ENCODE measurements at regions of chr1 and their contacts with region 1.

Region 1: GRCh38 chr1:163071405-163072255 is 2.5 kb downstream of the RGS4 start:
- DNase-seq: peak; percentile 72
- ATAC-seq: peak; percentile 47
- H3K4me3 Mint-ChIP-seq: no peak overlapping the region
- H3K27ac Mint-ChIP-seq: no peak overlapping the region
- H3K4me1 Mint-ChIP-seq: peaks cover 18% of the 10 kb centered on the region
- H3K27me3 Mint-ChIP-seq: no peaks in the 10 kb centered on the region
- CTCF ChIP-seq: peak; percentile 46; the same call in 1 of the 2 replicates

Region 2: GRCh38 chr1:162847839-162848453 is 223.7 kb before region 1 on chr1:
- CTCF ChIA-PET with region 1: interaction called, 13 read pairs
- POLR2A ChIA-PET with region 1: no interaction called
- DNase-seq: peak; percentile 86
- ATAC-seq: peak; percentile 47
- H3K4me3 Mint-ChIP-seq: no peak overlapping the region
- H3K27ac Mint-ChIP-seq: no peak overlapping the region
- H3K4me1 Mint-ChIP-seq: no peaks in the 10 kb centered on the region
- H3K27me3 Mint-ChIP-seq: no peaks in the 10 kb centered on the region; the same call in 1 of the 2 replicates
- CTCF ChIP-seq: peak; percentile 80; the same call in 1 of the 2 replicates

Region 3: GRCh38 chr1:162854245-162854882 is 217.3 kb before region 1 on chr1:
- CTCF ChIA-PET with region 1: interaction called, 17 read pairs
- POLR2A ChIA-PET with region 1: no interaction called
- DNase-seq: peak; percentile 60
- ATAC-seq: peak; percentile 82
- H3K4me3 Mint-ChIP-seq: no peak overlapping the region
- H3K27ac Mint-ChIP-seq: no peak overlapping the region
- H3K4me1 Mint-ChIP-seq: no peaks in the 10 kb centered on the region
- H3K27me3 Mint-ChIP-seq: no peaks in the 10 kb centered on the region
- CTCF ChIP-seq: peak; percentile 41

Region 4: DNA sequence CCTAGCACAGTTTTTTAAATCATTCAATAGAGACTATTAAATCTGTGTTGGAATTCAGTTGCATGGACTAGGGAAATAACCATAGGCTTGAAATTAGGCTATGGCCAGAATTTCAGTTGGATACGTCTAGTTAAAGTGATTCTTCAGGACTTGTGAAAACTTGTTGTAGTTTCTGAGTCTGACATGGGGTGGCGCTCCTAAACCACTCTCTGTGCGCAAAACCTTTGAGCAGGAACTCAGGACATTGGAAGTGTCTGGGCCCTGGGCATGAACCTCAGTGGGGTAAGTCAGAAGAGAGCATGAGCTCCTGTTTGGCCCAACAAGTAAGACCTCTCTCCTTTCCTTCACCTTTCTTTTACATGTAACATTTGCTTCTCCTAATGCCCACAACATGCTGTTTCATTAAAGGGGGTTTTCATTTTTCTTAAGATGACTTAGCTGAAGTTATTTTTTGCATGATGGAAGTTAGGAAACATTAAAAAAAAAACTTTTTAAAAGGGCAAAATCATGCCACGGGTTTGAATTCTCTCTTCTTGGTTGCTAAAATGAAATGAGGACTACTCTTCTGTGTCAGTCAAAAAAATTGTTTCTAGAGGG is 193.5 kb before region 1 on chr1:
- CTCF ChIA-PET with region 1: interaction called, 36 read pairs
- POLR2A ChIA-PET with region 1: no interaction called
- DNase-seq: peak; percentile 83
- ATAC-seq: peak; percentile 94
- H3K4me3 Mint-ChIP-seq: no peak overlapping the region
- H3K27ac Mint-ChIP-seq: no peak overlapping the region
- H3K4me1 Mint-ChIP-seq: peaks cover 14% of the 10 kb centered on the region
- H3K27me3 Mint-ChIP-seq: no peaks in the 10 kb centered on the region
- CTCF ChIP-seq: peak; percentile 71

Region 5: DNA sequence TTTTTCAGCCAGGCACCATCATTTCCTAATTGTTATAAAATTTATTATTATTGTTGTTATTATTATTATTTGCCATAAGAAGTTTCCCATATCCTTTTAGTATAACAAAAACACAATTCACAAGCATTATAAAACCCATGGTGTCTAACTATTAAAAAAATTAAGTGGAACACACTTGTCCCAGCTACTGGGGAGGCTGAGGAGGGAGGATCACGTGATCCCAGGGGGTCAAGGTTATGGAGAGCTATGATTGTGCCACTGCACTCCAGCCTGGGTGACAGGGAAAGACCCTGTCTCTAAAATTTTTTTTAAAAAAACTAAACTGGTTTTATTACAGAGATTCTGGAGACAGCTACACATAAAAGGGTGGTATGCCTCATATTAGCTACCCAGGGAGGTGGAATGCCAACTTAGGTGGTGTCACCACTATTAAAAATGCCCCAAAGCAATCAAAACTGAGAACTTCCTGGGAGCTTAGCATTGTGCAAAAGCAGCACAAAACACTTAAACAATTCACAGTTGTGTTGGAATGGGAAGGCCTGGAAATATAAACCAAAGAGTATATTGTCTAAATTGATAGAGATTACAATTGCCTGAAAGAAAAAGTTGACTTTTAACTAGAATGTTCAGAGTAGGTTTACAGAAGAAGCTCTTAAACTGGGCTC is 11.2 kb before region 1 on chr1:
- CTCF ChIA-PET with region 1: interaction called, 11 read pairs
- POLR2A ChIA-PET with region 1: interaction called, 5 read pairs
- DNase-seq: no peak
- ATAC-seq: no peak
- H3K4me3 Mint-ChIP-seq: no peak overlapping the region
- H3K27ac Mint-ChIP-seq: no peak overlapping the region
- H3K4me1 Mint-ChIP-seq: peaks cover 23% of the 10 kb centered on the region
- H3K27me3 Mint-ChIP-seq: no peaks in the 10 kb centered on the region
- CTCF ChIP-seq: no peak

Region 6: GRCh38 chr1:163174524-163175437 is 103.2 kb after region 1 on chr1:
- CTCF ChIA-PET with region 1: interaction called, 22 read pairs
- POLR2A ChIA-PET with region 1: no interaction called
- DNase-seq: peak; percentile 71
- ATAC-seq: peak; percentile 77
- H3K4me3 Mint-ChIP-seq: 0 out of 2 replicates have a peak overlapping the region, but pooled peaks have one; percentile 6
- H3K27ac Mint-ChIP-seq: peak overlapping the region; percentile 38; the same call in 1 of the 2 replicates
- H3K4me1 Mint-ChIP-seq: peaks cover 23% of the 10 kb centered on the region
- H3K27me3 Mint-ChIP-seq: no peaks in the 10 kb centered on the region
- CTCF ChIP-seq: peak; percentile 56

Region 7: DNA sequence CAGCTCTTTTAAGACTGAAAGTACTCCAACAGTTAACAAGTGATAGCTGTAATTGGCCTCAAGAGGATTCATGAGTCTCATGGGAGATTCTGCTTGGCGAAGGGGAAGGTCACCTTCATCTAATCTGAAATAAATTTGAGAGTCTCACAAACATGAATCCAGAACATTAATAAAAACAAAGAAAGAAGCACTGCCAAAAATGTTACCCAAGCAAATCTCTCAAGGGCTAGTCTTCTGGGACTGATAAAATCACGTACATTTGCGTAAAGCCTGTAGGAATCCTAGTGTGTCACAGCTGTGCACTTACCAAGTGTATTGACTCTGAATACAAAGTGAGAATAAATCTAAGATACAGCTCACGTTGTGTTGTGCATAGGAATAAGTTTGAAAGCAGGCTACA is 228.9 kb after region 1 on chr1:
- CTCF ChIA-PET with region 1: no interaction called
- POLR2A ChIA-PET with region 1: no interaction called
- DNase-seq: no peak
- ATAC-seq: no peak
- H3K4me3 Mint-ChIP-seq: no peak overlapping the region
- H3K27ac Mint-ChIP-seq: no peak overlapping the region; the same call in 1 of the 2 replicates
- H3K4me1 Mint-ChIP-seq: peaks cover 21% of the 10 kb centered on the region
- H3K27me3 Mint-ChIP-seq: no peaks in the 10 kb centered on the region
- CTCF ChIP-seq: no peak

Region 8: DNA sequence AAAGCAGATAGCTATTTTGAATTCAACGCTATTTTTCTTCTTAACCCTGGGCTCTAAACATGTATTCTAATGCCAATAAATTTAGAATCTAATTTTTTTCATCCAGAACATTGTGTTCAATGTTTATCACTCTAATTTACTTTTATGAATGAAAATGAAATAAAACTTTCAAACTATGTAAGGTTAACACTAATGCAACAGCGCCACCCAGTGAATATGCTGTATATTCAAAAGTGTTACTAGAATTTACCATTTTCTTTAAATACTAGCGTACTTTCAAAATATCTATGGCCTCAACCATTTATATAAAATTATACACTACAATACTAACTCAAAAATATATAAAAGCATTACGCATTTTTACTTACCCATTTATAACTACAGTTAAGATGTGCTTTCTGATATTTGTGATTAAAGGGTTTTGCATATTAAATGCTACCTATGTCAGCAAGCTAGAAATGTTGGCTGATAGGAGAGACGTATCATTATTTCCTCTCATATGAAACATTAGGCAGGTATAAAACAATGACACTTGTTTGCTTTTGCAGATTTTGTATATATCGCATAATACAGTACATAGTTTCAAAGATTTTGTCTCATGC is 244.2 kb after region 1 on chr1:
- CTCF ChIA-PET with region 1: interaction called, 48 read pairs
- POLR2A ChIA-PET with region 1: no interaction called
- DNase-seq: no peak
- ATAC-seq: no peak
- H3K4me3 Mint-ChIP-seq: no peak overlapping the region
- H3K27ac Mint-ChIP-seq: no peak overlapping the region
- H3K4me1 Mint-ChIP-seq: peaks cover 3% of the 10 kb centered on the region
- H3K27me3 Mint-ChIP-seq: no peaks in the 10 kb centered on the region
- CTCF ChIP-seq: peak; percentile 45; the same call in 1 of the 2 replicates